Sigmoid colon (tissue), 7 donors: ENCODE measurements at regions of chr11 and their contacts with region 1.

Region 1: DNA sequence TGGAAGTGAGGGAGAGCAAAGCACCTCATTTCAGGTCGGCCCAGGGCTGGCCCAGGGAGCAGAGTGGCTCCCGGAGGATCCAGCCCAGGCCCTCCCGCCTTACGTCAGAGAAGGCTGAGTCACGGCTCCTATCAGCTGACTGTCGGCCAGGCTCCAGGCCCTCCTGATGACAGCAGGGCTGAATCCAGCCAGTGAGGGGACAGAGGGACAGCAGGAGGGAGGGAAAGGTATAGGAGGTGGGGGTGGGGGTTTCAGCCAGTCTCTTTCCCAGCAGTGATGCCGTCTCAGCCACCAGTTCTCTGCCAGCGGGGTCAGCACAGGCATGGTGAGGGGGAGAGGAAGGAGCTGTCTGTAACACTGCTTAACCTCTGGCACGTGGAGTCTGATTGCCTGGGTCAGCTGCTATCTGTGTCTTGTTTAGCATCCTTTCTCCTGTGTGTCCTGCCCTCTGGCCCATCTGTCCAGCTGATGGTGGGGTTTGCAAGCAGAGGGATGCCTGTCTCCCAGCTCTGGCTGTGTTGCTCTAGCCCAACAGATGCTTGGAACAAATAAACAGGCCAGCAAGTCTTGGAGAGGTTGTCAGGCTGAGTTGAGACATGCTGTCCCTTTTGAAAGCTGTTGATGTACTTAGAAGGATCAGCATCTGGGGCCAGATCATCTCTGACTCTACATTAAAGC is 74.0 kb downstream of the ADAMTS15 start:
- DNase-seq: peak; percentile 98
- H3K4me3 ChIP-seq: no peak overlapping the region
- H3K27ac ChIP-seq: peak overlapping the region; percentile 71 to 81 (median 76)
- H3K4me1 ChIP-seq: peaks cover 2 to 30% (median 25%) of the 10 kb centered on the region in 4 donors
- H3K27me3 ChIP-seq: no peaks in the 10 kb centered on the region
- CTCF ChIP-seq: no peak
- EP300 ChIP-seq: peak in 2 of 4 donors; percentile 88 to 93
- POLR2A ChIP-seq: no peak

Region 2: GRCh38 chr11:130601141-130601540 is 78.7 kb after region 1 on chr11:
- intact Hi-C with region 1: loop called (anchors 5 kb)
- DNase-seq: peak; percentile 92
- H3K4me3 ChIP-seq: no peak overlapping the region
- H3K27ac ChIP-seq: peak overlapping the region; percentile 57 to 75 (median 70)
- H3K4me1 ChIP-seq: peaks cover 0 to 37% (median 35%) of the 10 kb centered on the region in 4 donors
- H3K27me3 ChIP-seq: no peaks in the 10 kb centered on the region
- CTCF ChIP-seq: no peak
- EP300 ChIP-seq: peak in 2 of 4 donors; percentile 54 to 73
- POLR2A ChIP-seq: no peak

Region 3: GRCh38 chr11:130623670-130624668 is 101.5 kb after region 1 on chr11:
- intact Hi-C with region 1: loop called (anchors 5 kb)
- DNase-seq: no peak
- H3K4me3 ChIP-seq: no peak overlapping the region
- H3K27ac ChIP-seq: peak overlapping the region; percentile 60 to 84 (median 74)
- H3K4me1 ChIP-seq: peaks cover 0 to 51% (median 46%) of the 10 kb centered on the region in 4 donors
- H3K27me3 ChIP-seq: no peaks in the 10 kb centered on the region
- CTCF ChIP-seq: peak in 3 of 4 experiments; percentile 27 to 44 (median 36)
- EP300 ChIP-seq: peak in 2 of 4 donors; percentile 54 to 70
- POLR2A ChIP-seq: no peak

Region 4: GRCh38 chr11:130671801-130672700 is 149.6 kb after region 1 on chr11:
- intact Hi-C with region 1: loop called (anchors 5 kb)
- DNase-seq: peak; percentile 92
- H3K4me3 ChIP-seq: no peak overlapping the region
- H3K27ac ChIP-seq: peak overlapping the region; percentile 72 to 87 (median 82)
- H3K4me1 ChIP-seq: peaks cover 0 to 71% (median 65%) of the 10 kb centered on the region in 4 donors
- H3K27me3 ChIP-seq: no peaks in the 10 kb centered on the region
- CTCF ChIP-seq: no peak
- EP300 ChIP-seq: peak in 2 of 4 donors; percentile 61 to 62
- POLR2A ChIP-seq: no peak